IMR-90 (cell line): ENCODE measurements at regions of chr22 and their contacts with region 1.

Region 1: DNA sequence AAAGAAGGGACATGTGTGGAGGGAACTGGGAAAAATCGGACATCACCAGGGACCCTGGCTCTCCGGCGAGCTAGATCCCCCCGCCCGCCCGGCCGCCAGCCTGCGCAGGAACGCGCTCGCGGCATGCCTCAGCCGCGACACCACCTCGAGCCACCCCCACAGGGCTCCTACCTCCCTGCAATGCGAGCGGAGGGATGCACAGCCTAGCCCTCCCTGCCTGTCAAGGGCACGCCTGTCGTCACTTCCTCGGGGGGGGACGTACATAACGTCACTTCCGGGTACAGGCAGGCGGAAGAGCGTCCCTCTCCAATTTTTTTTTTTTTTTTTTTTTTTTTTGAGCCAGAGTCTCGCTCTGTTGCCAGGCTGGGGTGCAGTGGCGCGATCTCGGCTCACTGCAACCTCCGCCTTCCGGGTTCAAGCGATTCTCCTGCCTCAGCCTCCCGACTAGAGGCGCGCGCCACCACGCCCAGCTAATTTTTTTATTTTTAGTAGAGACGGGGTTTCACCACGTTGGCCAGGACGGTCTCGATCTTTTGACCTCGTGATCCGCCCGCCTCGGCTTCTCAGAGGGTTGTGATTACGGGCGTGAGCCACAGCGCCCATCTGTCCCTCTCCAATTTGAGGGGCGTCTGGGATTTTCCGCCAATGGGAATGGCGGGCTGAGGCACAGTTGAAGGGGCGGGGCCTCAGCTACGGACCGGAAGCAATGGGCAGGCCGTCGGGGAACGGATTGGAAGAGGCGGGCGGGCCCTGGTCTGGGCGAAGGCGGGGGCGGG is at the start of gene TXN2:
- DNase-seq: peak; percentile 95
- ATAC-seq: peak; percentile 94
- H3K4me3 ChIP-seq: peak within 1 kb of the TSS; percentile 64
- H3K27ac ChIP-seq: peak within 1 kb of the TSS; percentile 90
- H3K4me1 ChIP-seq: peaks cover 3% of the 10 kb centered on the region
- H3K27me3 ChIP-seq: no peaks in the 10 kb centered on the region
- CTCF ChIP-seq: no peak
- POLR2A ChIP-seq: peak; percentile 95
- RAD21 ChIP-seq: 0 out of 2 replicates have a peak, but pooled peaks have one; percentile 9
- total RNA-seq, gene TXN2: 49.6 and 51.7 TPM in 2 replicates

Region 2: GRCh38 chr22:36201630-36202319 is 279.8 kb before region 1 on chr22 and contains the start of gene APOL4:
- CTCF ChIA-PET with region 1: no interaction called
- POLR2A ChIA-PET with region 1: interaction called, 13 read pairs
- dilution Hi-C with region 1: no loop called
- in situ Hi-C with region 1: loop called (anchors 10 kb)
- intact Hi-C with region 1: no loop called
- DNase-seq: no peak
- ATAC-seq: no peak
- H3K4me3 ChIP-seq: no peak within 1 kb of the TSS
- H3K27ac ChIP-seq: no peak within 1 kb of the TSS
- H3K4me1 ChIP-seq: peaks cover 9% of the 10 kb centered on the region
- H3K27me3 ChIP-seq: peaks cover 3% of the 10 kb centered on the region
- CTCF ChIP-seq: no peak
- POLR2A ChIP-seq: no peak
- RAD21 ChIP-seq: no peak
- total RNA-seq, gene APOL4: not detected in 2 replicates